ENCODE measurements at regions of chr15 and their contacts with region 1.

Region 1: DNA sequence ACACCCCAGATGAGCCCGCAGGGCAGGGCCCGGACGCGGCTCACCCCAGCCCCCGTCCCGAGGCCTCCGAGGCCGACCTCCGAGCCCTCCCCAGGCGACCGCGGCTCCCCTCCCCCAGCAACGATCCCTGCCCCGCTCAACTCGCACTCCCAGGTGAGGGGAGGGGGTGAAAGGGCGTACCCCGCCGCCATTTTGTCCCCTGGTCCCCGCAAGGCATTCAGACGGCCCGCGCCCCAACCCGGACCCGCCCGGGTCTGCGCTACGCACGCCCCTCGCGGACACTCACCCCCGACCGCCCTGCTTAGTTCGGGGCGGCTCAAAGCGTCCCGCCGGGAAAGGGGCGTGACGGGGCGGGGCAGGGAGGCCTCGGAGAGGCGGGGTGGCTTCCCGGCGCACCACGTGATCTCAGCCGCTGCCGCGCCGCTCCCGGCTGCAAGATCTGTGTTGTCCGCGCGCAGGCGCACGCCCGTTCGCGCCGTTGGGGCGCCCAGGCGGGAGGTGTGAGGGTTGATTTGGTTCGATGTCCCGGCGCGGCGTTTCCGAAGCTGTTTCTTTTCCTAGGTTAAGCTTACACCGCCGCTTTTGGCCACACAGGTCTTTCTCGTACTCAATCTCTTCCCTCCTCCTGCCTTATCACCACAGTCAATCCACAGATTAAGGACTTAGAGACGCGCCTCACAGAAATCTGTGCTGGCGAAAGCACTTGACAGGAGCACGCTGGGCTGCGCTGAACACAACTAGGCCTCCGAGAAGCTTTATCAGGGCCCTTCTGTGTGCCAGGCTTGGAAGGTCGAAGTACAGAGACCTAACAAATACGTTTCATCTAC is at the start of gene SCAPER:
- H3K4me3 ChIP-seq: peak within 1 kb of the TSS; percentile 99
- H3K27ac ChIP-seq: peak within 1 kb of the TSS; percentile 87
- H3K4me1 ChIP-seq: peaks cover 4% of the 10 kb centered on the region; the same call in 1 of the 2 replicates
- CTCF ChIP-seq: peak; percentile 68

Region 2: GRCh38 chr15:76823890-76824289 is 81.3 kb before region 1 on chr15:
- CTCF ChIA-PET with region 1: no interaction called
- POLR2A ChIA-PET with region 1: no interaction called
- H3K4me3 ChIP-seq: no peak overlapping the region
- H3K27ac ChIP-seq: no peak overlapping the region
- H3K4me1 ChIP-seq: no peaks in the 10 kb centered on the region
- CTCF ChIP-seq: no peak

Region 3: DNA sequence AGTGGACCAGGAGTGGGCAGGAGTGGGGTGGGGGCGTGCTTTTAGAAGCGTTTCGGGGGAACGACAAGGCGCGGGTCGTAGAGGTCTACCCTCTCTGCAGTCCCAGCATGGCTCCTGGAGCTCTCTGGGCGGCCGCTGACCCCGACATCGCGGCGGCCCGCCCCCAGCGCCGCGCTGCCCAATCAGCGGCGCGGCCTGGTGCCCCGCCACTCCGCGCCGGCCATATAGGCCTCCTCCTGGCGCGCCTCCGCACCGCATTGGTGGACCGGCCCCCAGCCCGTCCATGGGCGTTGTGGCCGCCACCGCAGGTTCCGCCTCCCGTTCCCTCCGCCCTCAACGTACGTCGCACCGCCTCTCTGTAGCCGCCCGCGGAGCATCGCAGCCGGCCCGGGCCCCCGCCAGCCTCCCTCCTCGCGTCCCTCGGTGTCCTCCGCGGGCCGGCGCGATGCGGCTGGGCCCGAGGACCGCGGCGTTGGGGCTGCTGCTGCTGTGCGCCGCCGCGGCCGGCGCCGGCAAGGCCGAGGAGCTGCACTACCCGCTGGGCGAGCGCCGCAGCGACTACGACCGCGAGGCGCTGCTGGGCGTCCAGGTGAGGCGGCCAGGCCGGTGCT is 26.3 kb after region 1 on chr15 and contains the start of gene RCN2:
- CTCF ChIA-PET with region 1: interaction called, 4 read pairs
- POLR2A ChIA-PET with region 1: interaction called, 16 read pairs
- H3K4me3 ChIP-seq: peak within 1 kb of the TSS; percentile 90
- H3K27ac ChIP-seq: peak within 1 kb of the TSS; percentile 86
- H3K4me1 ChIP-seq: peaks cover 6% of the 10 kb centered on the region; the same call in 1 of the 2 replicates
- CTCF ChIP-seq: no peak

Region 4: DNA sequence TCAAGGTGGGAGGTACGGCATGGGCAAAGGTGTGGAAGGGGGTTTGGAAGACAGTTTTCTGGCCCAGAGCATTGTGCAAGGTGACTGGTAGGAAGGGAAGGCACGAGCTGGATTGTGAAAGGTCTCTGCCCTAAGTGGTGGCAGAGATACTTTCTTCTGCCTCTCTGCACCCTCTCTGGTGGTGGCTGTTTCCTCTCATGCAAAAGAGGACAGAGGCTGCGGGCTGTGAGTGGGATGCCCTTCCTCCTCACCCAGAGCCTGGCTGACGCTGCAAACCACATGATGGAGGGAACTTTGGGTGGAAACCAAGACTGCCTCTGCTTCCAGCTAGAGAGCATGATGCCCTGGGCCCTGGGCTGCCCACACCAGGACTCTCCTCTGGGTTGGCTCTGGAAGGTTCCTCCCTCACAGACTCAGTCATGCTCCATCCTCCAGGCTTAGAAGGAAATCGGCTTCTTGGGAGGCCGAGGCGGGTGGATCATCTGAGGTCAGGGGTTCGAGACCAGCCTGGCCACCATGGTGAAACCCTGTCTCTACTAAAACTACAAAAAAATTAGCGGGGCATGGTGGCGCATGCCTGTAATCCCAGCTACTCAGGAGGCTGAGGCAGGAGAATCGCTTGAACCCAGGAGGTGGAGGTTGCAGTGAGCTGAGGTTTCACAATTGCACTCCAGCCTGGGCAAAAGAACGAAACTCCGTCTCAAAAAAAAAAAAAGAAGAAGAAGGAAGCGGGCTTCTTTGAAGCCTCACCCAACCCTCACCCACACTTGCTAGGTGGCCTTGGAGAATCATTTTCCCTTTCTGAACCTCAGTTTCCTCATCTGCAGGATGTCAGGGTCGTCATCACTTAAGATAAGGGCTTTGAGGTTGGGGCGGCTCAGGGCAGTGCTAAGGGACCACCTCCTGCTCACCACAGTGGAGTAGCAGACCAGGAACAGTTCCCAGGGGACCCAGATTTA is 98.0 kb after region 1 on chr15:
- CTCF ChIA-PET with region 1: no interaction called
- POLR2A ChIA-PET with region 1: no interaction called
- H3K4me3 ChIP-seq: no peak overlapping the region
- H3K27ac ChIP-seq: no peak overlapping the region
- H3K4me1 ChIP-seq: no peaks in the 10 kb centered on the region
- CTCF ChIP-seq: no peak

Measured in HEK293 (cell line).